ENCODE measurements at regions of chr5 and their contacts with region 1.

Region 1: GRCh38 chr5:170097934-170098333 is 7.8 kb upstream of the FOXI1 start:
- DNase-seq: no peak
- ATAC-seq: no peak
- H3K4me3 ChIP-seq: no peak overlapping the region
- H3K27ac ChIP-seq: no peak overlapping the region
- H3K4me1 ChIP-seq: no peaks in the 10 kb centered on the region
- H3K27me3 ChIP-seq: peaks cover 0 to 2% (median 0%) of the 10 kb centered on the region in 3 donors
- CTCF ChIP-seq: no peak

Region 2: DNA sequence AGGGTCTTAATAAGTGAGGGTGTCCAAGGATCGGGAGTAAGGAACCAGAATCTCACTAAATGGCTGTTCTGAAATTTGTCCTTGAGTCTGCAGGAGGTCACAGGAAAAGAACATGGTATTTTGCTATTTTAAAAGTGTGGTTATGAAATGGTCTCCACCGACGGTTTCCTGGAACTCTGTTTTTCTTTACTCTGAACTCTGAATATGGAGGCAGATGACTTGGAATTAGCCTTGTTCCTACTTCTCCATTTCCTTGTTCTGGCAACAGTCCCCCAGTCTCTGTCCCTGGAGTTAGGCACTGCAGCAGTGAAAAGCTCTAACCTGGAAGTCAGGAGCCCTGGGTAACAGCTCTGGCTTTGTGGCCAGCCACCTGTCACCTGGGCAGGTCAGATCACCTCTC is 88.2 kb after region 1 on chr5:
- intact Hi-C with region 1: loop called in 1 of 2 experiments (anchors 5 kb)
- DNase-seq: no peak
- ATAC-seq: no peak
- H3K4me3 ChIP-seq: no peak overlapping the region
- H3K27ac ChIP-seq: no peak overlapping the region
- H3K4me1 ChIP-seq: no peaks in the 10 kb centered on the region
- H3K27me3 ChIP-seq: no peaks in the 10 kb centered on the region
- CTCF ChIP-seq: no peak

Region 3: GRCh38 chr5:170302653-170303501 is 204.9 kb after region 1 on chr5:
- intact Hi-C with region 1: no loop called
- DNase-seq: peak; percentile 62 to 72
- ATAC-seq: peak in 2 of 4 donors; percentile 24 to 32
- H3K4me3 ChIP-seq: no peak overlapping the region
- H3K27ac ChIP-seq: no peak overlapping the region
- H3K4me1 ChIP-seq: no peaks in the 10 kb centered on the region
- H3K27me3 ChIP-seq: no peaks in the 10 kb centered on the region
- CTCF ChIP-seq: no peak

Region 4: DNA sequence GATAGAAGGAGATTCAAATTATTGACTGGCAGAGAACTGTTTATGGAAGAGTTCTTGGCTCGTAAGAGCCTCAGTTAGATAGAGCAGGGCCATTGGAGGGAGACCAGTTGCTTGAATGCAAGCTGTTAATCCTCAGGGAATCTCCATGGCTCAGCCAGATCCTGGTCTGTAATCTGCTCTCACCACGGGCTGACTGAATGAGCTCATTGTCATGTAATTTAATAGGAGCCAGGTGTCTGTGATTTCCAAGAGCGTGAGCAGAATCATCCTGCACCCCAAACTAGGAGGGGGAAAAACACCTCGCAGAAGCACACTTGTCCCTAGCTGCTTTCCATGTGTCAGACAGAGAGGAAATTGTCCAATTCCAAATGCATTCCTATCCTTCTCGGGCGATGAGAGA is 310.3 kb after region 1 on chr5:
- intact Hi-C with region 1: no loop called
- DNase-seq: no peak
- ATAC-seq: peak; percentile 56 to 86 (median 56)
- H3K4me3 ChIP-seq: no peak overlapping the region
- H3K27ac ChIP-seq: no peak overlapping the region
- H3K4me1 ChIP-seq: no peaks in the 10 kb centered on the region
- H3K27me3 ChIP-seq: peaks cover 0 to 4% (median 0%) of the 10 kb centered on the region in 3 donors
- CTCF ChIP-seq: no peak

Measured in psoas muscle (tissue), 8 donors.